Activated CD4-positive, alpha-beta memory T cell treated with anti-CD3 and anti-CD28 coated beads for 36 hours (primary cell): ENCODE measurements at regions of chr7 and their contacts with region 1.

Region 1: DNA sequence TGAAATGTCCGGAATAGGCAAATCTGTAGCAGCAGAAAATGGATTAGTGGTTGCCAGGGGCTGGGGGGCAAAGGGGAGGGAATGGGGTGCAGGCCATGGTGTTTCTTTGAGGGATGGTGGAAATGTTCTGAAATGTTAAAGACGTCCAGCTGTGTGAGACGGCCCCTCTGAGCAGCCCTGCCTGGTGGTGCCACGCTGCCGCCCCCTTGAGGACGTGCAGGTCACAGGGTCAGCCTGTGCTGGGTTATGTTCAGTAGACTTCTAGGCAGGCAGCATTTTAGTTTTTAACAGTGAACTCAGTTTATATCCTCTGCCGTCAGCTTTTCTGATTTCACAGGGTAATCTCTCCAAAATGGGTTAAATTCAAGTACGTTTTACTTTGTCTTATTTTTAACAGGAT is 9.4 kb downstream of the NUB1 start:
- DNase-seq: peak; percentile 68
- H3K4me3 Mint-ChIP-seq: peak overlapping the region; percentile 46
- H3K27ac Mint-ChIP-seq: peak overlapping the region; percentile 95
- H3K4me1 Mint-ChIP-seq: peaks cover 35% of the 10 kb centered on the region
- H3K27me3 Mint-ChIP-seq: no peaks in the 10 kb centered on the region

Region 2: GRCh38 chr7:151232091-151232916 is 118.7 kb before region 1 on chr7 and contains the start of gene CHPF2:
- CTCF ChIA-PET with region 1: no interaction called
- POLR2A ChIA-PET with region 1: no interaction called
- intact Hi-C with region 1: loop called (anchors 2 kb)
- DNase-seq: peak; percentile 95
- H3K4me3 Mint-ChIP-seq: peak within 1 kb of the TSS; percentile 100
- H3K27ac Mint-ChIP-seq: peak within 1 kb of the TSS; percentile 99
- H3K4me1 Mint-ChIP-seq: peaks cover 38% of the 10 kb centered on the region
- H3K27me3 Mint-ChIP-seq: no peaks in the 10 kb centered on the region
- total RNA-seq, gene CHPF2: 33.6 to 34.2 TPM

Region 3: GRCh38 chr7:151315038-151315655 is 35.9 kb before region 1 on chr7:
- CTCF ChIA-PET with region 1: interaction called, 161 read pairs
- POLR2A ChIA-PET with region 1: interaction called, 7 read pairs
- intact Hi-C with region 1: loop called (anchors 1 kb)
- DNase-seq: peak; percentile 82
- H3K4me3 Mint-ChIP-seq: no peak overlapping the region
- H3K27ac Mint-ChIP-seq: peak overlapping the region; percentile 53
- H3K4me1 Mint-ChIP-seq: peaks cover 10% of the 10 kb centered on the region
- H3K27me3 Mint-ChIP-seq: no peaks in the 10 kb centered on the region

Region 4: GRCh38 chr7:151439855-151440798 is 89.1 kb after region 1 on chr7 and contains the start of gene CRYGN:
- CTCF ChIA-PET with region 1: interaction called, 10 read pairs
- POLR2A ChIA-PET with region 1: no interaction called
- intact Hi-C with region 1: loop called (anchors 5 kb)
- DNase-seq: no peak
- H3K4me3 Mint-ChIP-seq: peak within 1 kb of the TSS; percentile 41
- H3K27ac Mint-ChIP-seq: no peak within 1 kb of the TSS
- H3K4me1 Mint-ChIP-seq: peaks cover 28% of the 10 kb centered on the region
- H3K27me3 Mint-ChIP-seq: no peaks in the 10 kb centered on the region
- total RNA-seq, gene CRYGN: 0.21 TPM in 1 of 2 experiments, not detected in the other

Region 5: DNA sequence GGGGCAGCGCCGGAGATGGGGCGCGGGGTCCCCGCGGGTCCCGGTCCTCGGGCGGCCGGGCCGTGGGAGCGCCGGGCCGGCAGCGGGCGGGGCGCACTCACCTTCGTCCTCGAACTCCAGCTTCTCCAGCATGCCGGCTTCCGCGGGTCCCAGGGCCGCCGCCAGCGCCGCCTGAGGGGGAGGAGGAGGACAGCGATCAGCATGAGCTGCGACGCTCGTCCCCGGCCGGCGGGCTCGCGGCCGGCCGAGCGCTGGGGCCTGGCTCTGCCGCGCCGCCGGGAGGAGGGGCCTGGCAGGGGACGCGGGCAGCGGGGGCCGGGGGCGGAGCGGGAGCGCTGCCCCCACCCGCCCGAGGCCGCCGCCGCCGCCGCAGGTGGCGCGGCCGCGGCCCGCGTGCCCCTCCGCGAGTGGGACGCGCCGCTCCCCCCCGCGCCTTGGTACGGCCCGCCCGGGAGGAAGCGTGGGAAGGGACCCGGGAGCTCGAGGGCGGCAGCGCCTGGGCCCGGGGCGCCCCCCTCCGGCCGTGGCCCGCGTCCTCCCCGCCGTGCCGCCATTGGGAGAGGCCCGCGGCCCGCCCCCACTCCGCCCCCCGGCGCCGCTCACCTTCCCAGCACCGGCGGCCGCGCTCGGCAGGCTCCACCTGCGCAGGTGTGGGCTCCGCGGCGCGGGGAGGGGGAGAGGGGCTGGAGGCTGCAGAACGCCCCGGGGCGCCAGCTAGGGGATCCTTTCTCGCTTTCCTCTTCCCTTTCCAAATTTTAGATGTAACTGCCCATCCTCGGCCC is 281.1 kb after region 1 on chr7:
- CTCF ChIA-PET with region 1: no interaction called
- POLR2A ChIA-PET with region 1: no interaction called
- intact Hi-C with region 1: loop called (anchors 5 kb)
- DNase-seq: peak; percentile 90
- H3K4me3 Mint-ChIP-seq: peak overlapping the region; percentile 95
- H3K27ac Mint-ChIP-seq: peak overlapping the region; percentile 99
- H3K4me1 Mint-ChIP-seq: peaks cover 21% of the 10 kb centered on the region
- H3K27me3 Mint-ChIP-seq: no peaks in the 10 kb centered on the region

Region 6: DNA sequence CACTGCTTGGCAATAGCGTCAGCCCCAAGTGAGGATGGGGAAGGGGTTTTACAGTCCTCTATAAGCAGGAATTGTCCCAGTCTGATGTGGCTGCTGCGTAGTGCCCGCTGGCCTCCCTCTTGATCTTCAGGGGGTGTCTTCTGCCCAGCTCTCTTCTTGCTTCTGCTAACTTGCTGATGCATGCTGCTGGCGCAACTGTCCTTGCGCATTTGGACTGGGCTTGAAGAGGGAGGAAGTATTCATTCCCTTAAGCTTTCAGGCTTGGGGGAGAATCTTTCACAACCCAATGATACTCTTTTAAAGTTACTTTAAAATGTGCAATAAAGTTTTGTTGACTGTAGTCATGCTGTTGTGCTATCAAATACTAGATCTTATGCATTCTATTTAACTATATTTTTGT is 684.8 kb after region 1 on chr7:
- CTCF ChIA-PET with region 1: no interaction called
- POLR2A ChIA-PET with region 1: no interaction called
- intact Hi-C with region 1: no loop called
- DNase-seq: no peak
- H3K4me3 Mint-ChIP-seq: no peak overlapping the region
- H3K27ac Mint-ChIP-seq: no peak overlapping the region
- H3K4me1 Mint-ChIP-seq: peaks cover 5% of the 10 kb centered on the region
- H3K27me3 Mint-ChIP-seq: no peaks in the 10 kb centered on the region